CD8-positive, alpha-beta T cell (primary cell): ENCODE measurements at regions of chr1 and their contacts with region 1.

Region 1: DNA sequence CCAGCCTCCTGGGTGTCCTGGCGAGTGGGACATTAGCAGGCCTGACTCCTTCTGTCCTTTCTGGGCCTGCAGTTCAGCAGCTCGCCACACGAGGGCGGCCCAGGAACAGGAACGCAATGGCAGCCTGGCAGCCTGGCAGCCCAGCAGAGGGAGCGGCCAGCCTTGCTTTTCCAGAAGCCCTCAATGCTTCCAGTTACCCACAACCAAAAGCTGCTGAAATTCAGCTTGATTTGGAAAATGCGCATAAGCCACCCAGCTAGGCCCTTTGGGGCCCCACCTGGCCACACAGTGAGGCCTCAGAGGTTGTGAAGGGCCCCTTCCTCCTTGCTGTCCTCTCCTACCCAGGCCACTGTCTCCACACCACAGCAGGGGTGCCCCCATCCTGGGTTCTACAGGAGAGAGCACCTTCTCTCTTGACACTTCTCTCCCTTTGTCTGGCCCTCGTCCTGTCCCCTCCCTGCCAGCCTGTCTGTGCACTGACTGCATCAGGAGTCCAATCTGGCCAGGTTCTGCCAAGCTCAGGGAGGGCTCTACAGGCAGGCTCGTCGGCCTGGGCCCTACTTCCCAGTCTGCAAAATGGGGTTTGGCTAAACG is 103.4 kb upstream of the VAMP3 start:
- DNase-seq: peak; percentile 73 to 91 (median 81)
- ATAC-seq: peak; percentile 83
- H3K4me3 ChIP-seq: no peak overlapping the region
- H3K4me3 Mint-ChIP-seq: no peak overlapping the region
- H3K27ac ChIP-seq: no peak overlapping the region
- H3K27ac Mint-ChIP-seq: no peak overlapping the region
- H3K4me1 ChIP-seq: peaks cover 5% of the 10 kb centered on the region
- H3K4me1 Mint-ChIP-seq: peaks cover 10% of the 10 kb centered on the region
- H3K27me3 ChIP-seq: peaks cover 0 to 3% of the 10 kb centered on the region in 2 experiments
- H3K27me3 Mint-ChIP-seq: peaks cover 2% of the 10 kb centered on the region
- CTCF ChIP-seq: peak; percentile 95

Region 2: DNA sequence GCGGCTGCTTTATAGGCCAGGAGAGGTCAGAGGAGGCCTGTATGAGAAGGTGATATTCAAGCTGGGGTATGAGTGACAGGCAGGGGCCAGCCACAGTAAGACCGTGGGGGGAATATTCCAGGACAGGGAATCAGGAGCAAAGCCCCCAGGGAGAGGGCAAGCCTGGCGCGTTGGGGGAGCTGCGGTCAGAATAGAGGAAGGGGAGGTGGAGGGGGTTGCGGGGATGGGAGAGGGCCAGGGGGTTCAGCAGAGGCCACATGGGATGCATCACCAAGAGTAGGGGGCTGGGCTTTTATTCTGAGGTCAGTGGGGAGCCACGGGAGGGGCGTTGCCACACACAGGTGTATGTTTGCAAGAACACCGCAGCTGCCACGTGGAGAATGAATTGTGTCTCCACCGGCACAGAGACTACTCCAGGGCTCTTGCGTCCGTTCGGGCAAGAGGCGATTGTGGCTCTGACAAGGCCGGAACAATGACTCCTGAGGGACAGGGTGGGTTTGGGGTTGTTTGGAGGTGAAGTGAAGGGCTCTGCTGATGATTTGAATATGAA is 18.7 kb after region 1 on chr1:
- CTCF ChIA-PET with region 1: interaction called, 65 read pairs
- POLR2A ChIA-PET with region 1: no interaction called
- intact Hi-C with region 1: no loop called
- DNase-seq: no peak
- ATAC-seq: no peak
- H3K4me3 ChIP-seq: no peak overlapping the region
- H3K4me3 Mint-ChIP-seq: no peak overlapping the region
- H3K27ac ChIP-seq: no peak overlapping the region
- H3K27ac Mint-ChIP-seq: no peak overlapping the region
- H3K4me1 ChIP-seq: no peaks in the 10 kb centered on the region
- H3K4me1 Mint-ChIP-seq: no peaks in the 10 kb centered on the region
- H3K27me3 ChIP-seq: no peaks in the 10 kb centered on the region
- H3K27me3 Mint-ChIP-seq: peaks cover 17% of the 10 kb centered on the region
- CTCF ChIP-seq: no peak

Region 3: DNA sequence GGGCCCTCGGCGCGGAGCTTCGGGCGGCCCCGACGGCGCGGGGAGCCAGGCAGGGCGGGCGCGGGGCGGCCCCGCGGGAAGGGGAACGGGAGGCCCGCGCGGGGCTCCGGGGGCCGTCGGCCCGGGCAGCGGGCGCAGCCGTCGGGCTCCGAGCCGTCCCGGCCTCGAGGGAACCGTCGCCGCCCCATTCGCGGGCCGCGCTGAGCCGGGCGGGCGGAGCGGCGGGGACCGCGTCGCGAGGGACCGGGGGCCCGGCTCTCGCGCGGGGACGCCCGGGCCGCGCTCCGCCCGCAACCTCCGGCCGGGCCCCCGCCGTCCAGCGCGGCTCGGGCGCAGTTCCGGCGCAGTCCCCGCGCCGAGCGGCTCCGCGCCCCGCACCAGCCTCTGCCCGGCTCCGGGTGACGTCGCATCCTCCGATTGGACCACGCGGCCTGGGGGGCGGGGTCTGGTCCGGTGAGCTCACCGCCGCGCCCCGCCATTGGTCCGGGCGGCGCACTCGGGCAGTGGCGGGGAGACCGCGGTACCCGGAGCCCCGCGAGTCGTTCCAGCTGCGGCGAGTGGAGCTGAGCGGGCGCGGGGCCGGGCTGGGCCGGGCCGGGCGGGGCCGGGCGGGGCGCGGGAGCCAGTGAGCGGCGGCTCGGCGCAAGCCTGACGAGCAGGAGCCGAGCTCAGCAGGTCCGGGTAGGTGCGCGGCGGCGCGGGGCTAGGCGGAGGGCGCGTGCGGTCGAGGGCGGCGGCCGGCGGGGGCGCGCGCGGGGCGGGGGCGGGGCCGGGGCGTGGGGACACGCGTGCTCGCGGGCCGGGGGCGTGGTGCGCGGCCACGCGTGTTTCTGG is 36.7 kb after region 1 on chr1:
- CTCF ChIA-PET with region 1: interaction called, 4 read pairs
- POLR2A ChIA-PET with region 1: no interaction called
- intact Hi-C with region 1: loop called in 1 of 2 experiments (anchors 2 kb)
- DNase-seq: peak; percentile 82 to 92 (median 90)
- ATAC-seq: peak; percentile 95
- H3K4me3 ChIP-seq: no peak overlapping the region
- H3K4me3 Mint-ChIP-seq: peak overlapping the region; percentile 78
- H3K27ac ChIP-seq: no peak overlapping the region
- H3K27ac Mint-ChIP-seq: no peak overlapping the region
- H3K4me1 ChIP-seq: peaks cover 4% of the 10 kb centered on the region
- H3K4me1 Mint-ChIP-seq: peaks cover 14% of the 10 kb centered on the region
- H3K27me3 ChIP-seq: peaks cover 14 to 17% of the 10 kb centered on the region in 2 experiments
- H3K27me3 Mint-ChIP-seq: peaks cover 50% of the 10 kb centered on the region
- CTCF ChIP-seq: no peak

Region 4: GRCh38 chr1:7752512-7753417 is 85.0 kb after region 1 on chr1:
- CTCF ChIA-PET with region 1: interaction called, 447 read pairs
- POLR2A ChIA-PET with region 1: interaction called, 9 read pairs
- intact Hi-C with region 1: loop called in 1 of 2 experiments (anchors 1 kb)
- DNase-seq: peak in 8 of 9 experiments; percentile 16 to 72 (median 54)
- ATAC-seq: no peak
- H3K4me3 ChIP-seq: no peak overlapping the region
- H3K4me3 Mint-ChIP-seq: peak overlapping the region; percentile 27
- H3K27ac ChIP-seq: no peak overlapping the region
- H3K27ac Mint-ChIP-seq: no peak overlapping the region
- H3K4me1 ChIP-seq: no peaks in the 10 kb centered on the region
- H3K4me1 Mint-ChIP-seq: peaks cover 19% of the 10 kb centered on the region
- H3K27me3 ChIP-seq: no peaks in the 10 kb centered on the region
- H3K27me3 Mint-ChIP-seq: peaks cover 2% of the 10 kb centered on the region
- CTCF ChIP-seq: peak; percentile 90

Region 5: GRCh38 chr1:7902478-7903085 is 234.9 kb after region 1 on chr1:
- CTCF ChIA-PET with region 1: interaction called, 19 read pairs
- POLR2A ChIA-PET with region 1: no interaction called
- intact Hi-C with region 1: loop called in 1 of 2 experiments (anchors 1 kb)
- DNase-seq: peak in 8 of 9 experiments; percentile 31 to 84 (median 60)
- ATAC-seq: peak; percentile 69
- H3K4me3 ChIP-seq: peak overlapping the region; percentile 39 to 46
- H3K4me3 Mint-ChIP-seq: peak overlapping the region; percentile 65
- H3K27ac ChIP-seq: no peak overlapping the region
- H3K27ac Mint-ChIP-seq: no peak overlapping the region
- H3K4me1 ChIP-seq: peaks cover 4% of the 10 kb centered on the region
- H3K4me1 Mint-ChIP-seq: peaks cover 9% of the 10 kb centered on the region
- H3K27me3 ChIP-seq: no peaks in the 10 kb centered on the region
- H3K27me3 Mint-ChIP-seq: no peaks in the 10 kb centered on the region
- CTCF ChIP-seq: peak; percentile 53

Region 6: DNA sequence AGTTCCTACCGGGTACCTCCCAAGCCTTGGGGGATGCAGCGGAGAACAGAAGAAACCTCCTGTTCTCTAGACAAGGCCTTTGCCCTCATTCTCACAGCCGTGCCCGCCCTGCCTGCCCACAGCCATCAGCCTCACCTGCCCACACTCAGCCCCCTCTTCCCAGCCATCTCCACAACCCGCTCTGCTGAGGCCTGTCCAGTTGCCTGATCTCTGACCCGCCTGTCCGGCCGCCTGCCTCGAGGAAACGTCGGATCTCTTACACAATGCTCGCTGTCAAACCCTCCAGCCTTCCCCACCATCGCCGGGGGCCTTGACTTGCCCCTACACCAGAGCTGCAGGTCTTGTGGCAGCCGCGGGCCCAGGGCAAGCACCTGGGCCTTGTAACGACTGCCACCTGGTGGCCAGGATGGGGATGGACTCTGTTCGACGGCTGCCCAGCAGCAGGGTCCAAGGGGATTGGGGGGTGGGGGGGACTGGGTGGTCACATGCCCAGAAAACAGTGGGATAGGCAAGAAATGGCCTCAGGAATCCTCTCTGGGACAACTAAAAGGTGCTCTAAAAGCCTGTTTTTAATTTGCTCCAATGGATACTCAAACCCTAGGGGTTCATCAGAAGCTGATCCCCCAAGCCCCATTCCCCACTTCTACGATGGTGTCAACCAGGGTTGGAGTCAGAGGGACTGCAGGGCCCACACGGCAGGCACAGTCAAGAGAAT is 681.2 kb after region 1 on chr1:
- CTCF ChIA-PET with region 1: no interaction called
- POLR2A ChIA-PET with region 1: no interaction called
- intact Hi-C with region 1: loop called in 1 of 2 experiments (anchors 10 kb)
- DNase-seq: peak; percentile 47 to 83 (median 74)
- ATAC-seq: peak; percentile 96
- H3K4me3 ChIP-seq: no peak overlapping the region
- H3K4me3 Mint-ChIP-seq: no peak overlapping the region
- H3K27ac ChIP-seq: no peak overlapping the region
- H3K27ac Mint-ChIP-seq: peak overlapping the region; percentile 70
- H3K4me1 ChIP-seq: peaks cover 3% of the 10 kb centered on the region
- H3K4me1 Mint-ChIP-seq: peaks cover 4% of the 10 kb centered on the region
- H3K27me3 ChIP-seq: no peaks in the 10 kb centered on the region
- H3K27me3 Mint-ChIP-seq: peaks cover 2% of the 10 kb centered on the region
- CTCF ChIP-seq: peak; percentile 69